ENCODE measurements at regions of chr3 and their contacts with region 1.

Region 1: DNA sequence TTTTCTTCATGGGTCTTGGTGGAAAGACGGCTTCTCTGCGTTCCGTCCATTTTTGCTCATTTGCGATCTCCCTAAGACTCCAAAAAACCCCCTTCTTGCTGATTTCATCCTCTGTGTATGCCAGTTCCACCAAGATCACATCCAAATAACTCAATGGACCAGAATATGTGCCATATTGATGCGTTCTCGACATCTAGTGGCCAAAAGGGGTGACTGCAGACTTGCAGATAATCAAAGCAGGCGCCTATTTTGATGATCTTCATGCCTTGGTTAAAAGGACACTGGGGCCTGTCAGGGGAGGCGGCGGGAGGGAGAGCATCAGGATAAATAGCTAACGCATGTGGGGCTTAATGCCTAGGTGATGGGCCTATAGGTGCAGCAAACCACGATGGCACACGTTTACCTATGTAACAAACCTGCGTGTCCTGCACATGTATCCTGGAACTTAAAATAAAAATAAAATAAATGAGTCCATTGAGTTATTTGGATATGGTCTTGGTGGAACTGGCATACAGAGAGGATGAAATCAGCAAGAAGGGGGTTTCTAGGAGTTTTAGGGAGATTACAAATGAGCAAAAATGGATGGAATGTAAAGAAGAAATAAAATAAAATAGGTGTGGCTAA is 104.2 kb upstream of the RAD18 start:
- DNase-seq: peak in 3 of 5 donors; percentile 29 to 43 (median 43)
- ATAC-seq: peak; percentile 64 to 86 (median 73)
- H3K4me3 ChIP-seq: no peak overlapping the region
- H3K27ac ChIP-seq: peak overlapping the region in 4 of 12 donors; percentile 26 to 29 (median 27)
- H3K4me1 ChIP-seq: peaks cover 0 to 37% (median 14%) of the 10 kb centered on the region in 12 donors
- H3K27me3 ChIP-seq: no peaks in the 10 kb centered on the region
- CTCF ChIP-seq: peak; percentile 79 to 96 (median 94)
- POLR2A ChIP-seq: no peak

Region 2: DNA sequence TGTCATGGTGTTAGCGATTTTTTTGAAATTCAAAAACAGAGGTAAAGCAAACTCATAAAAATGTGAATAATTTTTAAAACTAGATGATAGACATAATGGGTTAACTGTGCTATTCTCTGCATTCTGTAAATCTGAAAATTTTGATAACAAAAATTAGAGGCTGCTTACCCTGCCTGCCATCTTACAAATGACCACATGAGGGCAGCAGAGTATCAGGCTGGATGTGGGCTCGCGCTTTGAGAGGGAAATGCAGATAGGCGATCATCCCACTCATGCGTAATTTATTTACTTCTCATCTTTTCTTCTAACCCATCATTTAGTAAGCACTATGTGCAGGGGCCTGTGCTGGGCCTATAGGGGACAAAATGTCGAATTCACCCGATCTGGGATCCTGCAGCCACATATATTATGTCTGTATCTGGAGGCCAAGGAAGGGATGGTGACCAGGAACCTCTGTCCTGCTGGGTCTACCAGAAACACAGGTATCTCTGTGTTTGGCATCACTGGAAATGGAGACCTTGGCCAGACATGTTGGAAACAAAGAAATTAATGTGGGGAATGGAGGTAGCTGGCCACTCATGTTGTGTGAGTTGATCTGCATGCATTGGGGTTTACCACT is 96.4 kb before region 1 on chr3:
- intact Hi-C with region 1: loop called (anchors 1 to 5 kb)
- DNase-seq: peak in 3 of 5 donors; percentile 43 to 56 (median 54)
- ATAC-seq: peak; percentile 5 to 70 (median 64)
- H3K4me3 ChIP-seq: no peak overlapping the region
- H3K27ac ChIP-seq: no peak overlapping the region
- H3K4me1 ChIP-seq: peaks cover 0 to 3% (median 0%) of the 10 kb centered on the region in 12 donors
- H3K27me3 ChIP-seq: peaks cover 0 to 6% (median 0%) of the 10 kb centered on the region in 9 donors
- CTCF ChIP-seq: peak; percentile 94 to 100 (median 99)
- POLR2A ChIP-seq: no peak

Region 3: GRCh38 chr3:8987645-8988383 is 79.7 kb before region 1 on chr3:
- intact Hi-C with region 1: loop called (anchors 1 to 5 kb)
- DNase-seq: peak in 4 of 5 donors; percentile 52 to 68 (median 57)
- ATAC-seq: peak; percentile 56 to 81 (median 66)
- H3K4me3 ChIP-seq: no peak overlapping the region
- H3K27ac ChIP-seq: no peak overlapping the region
- H3K4me1 ChIP-seq: peaks cover 0 to 18% (median 3%) of the 10 kb centered on the region in 12 donors
- H3K27me3 ChIP-seq: no peaks in the 10 kb centered on the region
- CTCF ChIP-seq: peak; percentile 63 to 85 (median 74)
- POLR2A ChIP-seq: no peak

Region 4: DNA sequence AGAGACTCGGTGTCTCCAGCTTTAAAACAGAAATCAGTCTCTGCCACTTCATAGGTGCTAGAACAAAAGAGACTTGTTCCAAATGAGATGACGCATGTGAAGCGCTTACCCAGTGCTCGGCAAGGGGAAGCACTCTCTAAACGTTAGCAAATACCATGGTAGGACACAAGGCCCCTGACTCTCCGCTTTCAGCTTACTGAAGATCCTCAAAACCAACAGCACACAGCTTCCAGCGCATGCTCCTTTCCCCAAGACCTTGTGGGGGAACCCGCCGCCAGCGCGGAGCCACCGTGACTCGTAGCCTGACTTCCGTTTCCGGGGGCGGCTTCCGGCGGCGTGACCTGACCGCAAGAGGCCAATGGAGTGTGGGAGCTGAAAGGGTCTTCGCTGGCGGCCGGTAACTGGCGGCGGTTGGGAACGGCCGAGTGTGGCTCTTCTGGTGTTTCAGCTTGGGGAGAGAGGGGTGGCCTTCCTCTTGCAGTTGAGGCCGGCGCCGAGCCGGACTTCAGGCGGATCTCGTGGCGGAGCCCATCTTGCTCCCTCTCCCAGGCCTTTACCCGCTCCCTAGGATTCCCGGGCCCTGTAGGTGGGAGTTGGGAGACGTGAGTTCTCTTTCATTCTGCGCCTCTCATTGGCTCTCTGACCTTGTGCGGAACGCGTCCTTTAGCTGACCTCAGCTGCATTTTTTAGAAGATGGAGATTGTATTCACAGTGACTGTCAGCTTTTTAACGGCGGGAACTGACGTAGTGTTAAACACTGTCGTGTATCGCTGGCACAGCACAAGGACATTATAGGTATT is 295.5 kb after region 1 on chr3 and contains the start of gene THUMPD3:
- intact Hi-C with region 1: no loop called
- DNase-seq: peak; percentile 91 to 95 (median 94)
- ATAC-seq: peak; percentile 97 to 99 (median 99)
- H3K4me3 ChIP-seq: peak within 1 kb of the TSS; percentile 41 to 87 (median 72)
- H3K27ac ChIP-seq: peak within 1 kb of the TSS; percentile 79 to 97 (median 88)
- H3K4me1 ChIP-seq: peaks cover 0 to 27% (median 14%) of the 10 kb centered on the region in 12 donors
- H3K27me3 ChIP-seq: no peaks in the 10 kb centered on the region
- CTCF ChIP-seq: peak in 3 of 12 donors; percentile 6 to 24 (median 11)
- POLR2A ChIP-seq: peak in 1 of 2 donors; percentile 76
- total RNA-seq, gene THUMPD3: 25.3 to 65.5 (median 51.5) TPM